OCI-LY7 (cell line): ENCODE measurements at regions of chr4 and their contacts with region 1.

Region 1: GRCh38 chr4:114386637-114387233 is 211.9 kb upstream of the UGT8 start:
- DNase-seq: peak; percentile 34
- H3K4me3 ChIP-seq: no peak overlapping the region
- H3K27ac ChIP-seq: no peak overlapping the region
- H3K4me1 ChIP-seq: no peaks in the 10 kb centered on the region
- CTCF ChIP-seq: peak; percentile 94

Region 2: GRCh38 chr4:113278324-113278934 is 1108.3 kb before region 1 on chr4:
- CTCF ChIA-PET with region 1: no interaction called
- POLR2A ChIA-PET with region 1: no interaction called
- intact Hi-C with region 1: loop called (anchors 10 kb)
- DNase-seq: peak; percentile 67
- H3K4me3 ChIP-seq: no peak overlapping the region
- H3K27ac ChIP-seq: no peak overlapping the region
- H3K4me1 ChIP-seq: no peaks in the 10 kb centered on the region
- CTCF ChIP-seq: peak; percentile 94

Region 3: GRCh38 chr4:114535725-114536124 is 149.0 kb after region 1 on chr4:
- CTCF ChIA-PET with region 1: no interaction called
- POLR2A ChIA-PET with region 1: no interaction called
- intact Hi-C with region 1: no loop called
- DNase-seq: no peak
- H3K4me3 ChIP-seq: no peak overlapping the region
- H3K27ac ChIP-seq: no peak overlapping the region
- H3K4me1 ChIP-seq: no peaks in the 10 kb centered on the region
- CTCF ChIP-seq: no peak

Region 4: GRCh38 chr4:114659386-114660008 is 272.8 kb after region 1 on chr4:
- CTCF ChIA-PET with region 1: no interaction called
- POLR2A ChIA-PET with region 1: no interaction called
- intact Hi-C with region 1: loop called (anchors 1 kb)
- DNase-seq: peak; percentile 80
- H3K4me3 ChIP-seq: no peak overlapping the region
- H3K27ac ChIP-seq: no peak overlapping the region
- H3K4me1 ChIP-seq: no peaks in the 10 kb centered on the region
- CTCF ChIP-seq: peak; percentile 100

Region 5: GRCh38 chr4:114694770-114695169 is 308.0 kb after region 1 on chr4:
- CTCF ChIA-PET with region 1: no interaction called
- POLR2A ChIA-PET with region 1: no interaction called
- intact Hi-C with region 1: loop called (anchors 2 kb)
- DNase-seq: peak; percentile 61
- H3K4me3 ChIP-seq: no peak overlapping the region
- H3K27ac ChIP-seq: no peak overlapping the region
- H3K4me1 ChIP-seq: no peaks in the 10 kb centered on the region
- CTCF ChIP-seq: peak; percentile 89

Region 6: GRCh38 chr4:114807759-114808404 is 421.1 kb after region 1 on chr4:
- CTCF ChIA-PET with region 1: no interaction called
- POLR2A ChIA-PET with region 1: no interaction called
- intact Hi-C with region 1: loop called (anchors 5 kb)
- DNase-seq: peak; percentile 55
- H3K4me3 ChIP-seq: no peak overlapping the region
- H3K27ac ChIP-seq: no peak overlapping the region
- H3K4me1 ChIP-seq: no peaks in the 10 kb centered on the region
- CTCF ChIP-seq: peak; percentile 92